Ascending aorta (tissue), 2 donors: ENCODE measurements at regions of chr6 and their contacts with region 1.

Region 1: GRCh38 chr6:75368151-75368779 is 83.7 kb upstream of the TMEM30A start:
- DNase-seq: no peak
- H3K4me3 ChIP-seq: no peak overlapping the region
- H3K27ac ChIP-seq: peak overlapping the region; percentile 66 to 69
- H3K4me1 ChIP-seq: peaks cover 4 to 28% of the 10 kb centered on the region in 2 donors
- H3K27me3 ChIP-seq: no peaks in the 10 kb centered on the region
- CTCF ChIP-seq: peak in 2 of 3 experiments; percentile 32 to 55

Region 2: DNA sequence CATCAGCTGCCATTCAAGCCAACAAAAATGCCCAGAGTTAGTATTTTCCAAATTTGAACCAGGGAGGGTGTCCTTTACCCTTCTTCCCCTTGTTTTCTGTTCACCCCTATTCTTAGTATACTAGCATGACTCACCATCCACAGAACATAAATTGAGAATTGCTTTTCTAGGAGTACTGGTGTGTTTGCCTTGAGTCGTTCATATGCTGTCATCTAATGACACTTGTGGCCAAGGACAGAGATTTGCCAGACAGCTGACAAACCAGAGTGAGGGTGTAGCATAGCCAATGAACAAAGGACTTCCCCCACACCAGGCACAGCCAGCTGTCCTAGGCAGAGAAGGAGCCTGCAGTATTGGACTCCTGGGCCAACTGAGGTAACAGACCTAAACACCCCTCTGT is 63.1 kb after region 1 on chr6:
- intact Hi-C with region 1: loop called (anchors 5 kb)
- DNase-seq: peak in 1 of 2 donors; percentile 77
- H3K4me3 ChIP-seq: peak overlapping the region in 1 of 2 donors; percentile 5
- H3K27ac ChIP-seq: peak overlapping the region; percentile 69 to 86
- H3K4me1 ChIP-seq: peaks cover 11 to 42% of the 10 kb centered on the region in 2 donors
- H3K27me3 ChIP-seq: no peaks in the 10 kb centered on the region
- CTCF ChIP-seq: no peak

Region 3: DNA sequence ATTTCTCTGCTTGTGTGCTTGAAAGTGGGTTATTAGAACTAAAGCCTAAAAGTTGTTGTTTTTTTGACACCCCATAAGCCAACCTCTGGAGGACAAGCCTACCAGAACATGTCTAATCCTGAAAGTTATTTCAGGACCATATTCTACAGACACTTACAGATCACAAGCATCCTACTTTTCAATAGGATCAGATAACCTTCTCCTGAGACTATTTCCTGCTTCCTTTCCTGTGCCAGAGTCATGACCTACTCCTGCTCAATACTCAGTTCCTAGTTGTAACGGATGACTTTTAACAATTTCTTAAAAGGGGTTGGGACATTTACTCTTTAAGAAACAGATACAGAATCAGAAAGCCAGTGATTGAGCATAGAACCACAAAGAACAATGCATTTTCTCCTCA is 130.6 kb after region 1 on chr6:
- intact Hi-C with region 1: loop called (anchors 5 kb)
- DNase-seq: no peak
- H3K4me3 ChIP-seq: no peak overlapping the region
- H3K27ac ChIP-seq: no peak overlapping the region
- H3K4me1 ChIP-seq: peaks cover 0 to 10% of the 10 kb centered on the region in 2 donors
- H3K27me3 ChIP-seq: no peaks in the 10 kb centered on the region
- CTCF ChIP-seq: no peak